ENCODE measurements at regions of chr1 and their contacts with region 1.

Region 1: GRCh38 chr1:15526490-15527339 is at the start of gene DNAJC16:
- DNase-seq: peak; percentile 98 to 100 (median 100)
- ATAC-seq: peak; percentile 68 to 77 (median 73)
- H3K4me3 ChIP-seq: peak within 1 kb of the TSS; percentile 64 to 100 (median 76)
- H3K27ac ChIP-seq: peak within 1 kb of the TSS; percentile 68 to 99 (median 96)
- H3K4me1 ChIP-seq: peaks cover 8 to 43% (median 29%) of the 10 kb centered on the region in 12 donors
- H3K27me3 ChIP-seq: no peaks in the 10 kb centered on the region
- CTCF ChIP-seq: peak in 6 of 12 donors; percentile 6 to 45 (median 30)
- POLR2A ChIP-seq: peak in 1 of 2 donors; percentile 74
- total RNA-seq, gene DNAJC16: 11.9 to 22.8 (median 19.1) TPM

Region 2: GRCh38 chr1:15430787-15431570 is 95.7 kb before region 1 on chr1:
- intact Hi-C with region 1: no loop called
- DNase-seq: peak in 4 of 5 donors; percentile 67 to 82 (median 68)
- ATAC-seq: peak; percentile 22 to 77 (median 58)
- H3K4me3 ChIP-seq: no peak overlapping the region
- H3K27ac ChIP-seq: no peak overlapping the region
- H3K4me1 ChIP-seq: peaks cover 0 to 25% (median 11%) of the 10 kb centered on the region in 12 donors
- H3K27me3 ChIP-seq: no peaks in the 10 kb centered on the region
- CTCF ChIP-seq: peak; percentile 86 to 98 (median 96)
- POLR2A ChIP-seq: no peak

Region 3: GRCh38 chr1:15617175-15617880 is 90.6 kb after region 1 on chr1 and contains the start of gene DDI2:
- intact Hi-C with region 1: loop called in 3 of 10 experiments (anchors 1 to 5 kb)
- DNase-seq: peak; percentile 97 to 98 (median 97)
- ATAC-seq: peak; percentile 77 to 96 (median 94)
- H3K4me3 ChIP-seq: peak within 1 kb of the TSS; percentile 81 to 98 (median 92)
- H3K27ac ChIP-seq: peak within 1 kb of the TSS; percentile 82 to 99 (median 94)
- H3K4me1 ChIP-seq: peaks cover 8 to 51% (median 39%) of the 10 kb centered on the region in 12 donors
- H3K27me3 ChIP-seq: no peaks in the 10 kb centered on the region
- CTCF ChIP-seq: no peak
- POLR2A ChIP-seq: peak; percentile 51 to 94
- total RNA-seq, gene DDI2: 15.0 to 33.5 (median 24.5) TPM

Measured in heart left ventricle (tissue), 16 donors.